SK-N-SH (cell line): ENCODE measurements at regions of chr6 and their contacts with region 1.

Region 1: DNA sequence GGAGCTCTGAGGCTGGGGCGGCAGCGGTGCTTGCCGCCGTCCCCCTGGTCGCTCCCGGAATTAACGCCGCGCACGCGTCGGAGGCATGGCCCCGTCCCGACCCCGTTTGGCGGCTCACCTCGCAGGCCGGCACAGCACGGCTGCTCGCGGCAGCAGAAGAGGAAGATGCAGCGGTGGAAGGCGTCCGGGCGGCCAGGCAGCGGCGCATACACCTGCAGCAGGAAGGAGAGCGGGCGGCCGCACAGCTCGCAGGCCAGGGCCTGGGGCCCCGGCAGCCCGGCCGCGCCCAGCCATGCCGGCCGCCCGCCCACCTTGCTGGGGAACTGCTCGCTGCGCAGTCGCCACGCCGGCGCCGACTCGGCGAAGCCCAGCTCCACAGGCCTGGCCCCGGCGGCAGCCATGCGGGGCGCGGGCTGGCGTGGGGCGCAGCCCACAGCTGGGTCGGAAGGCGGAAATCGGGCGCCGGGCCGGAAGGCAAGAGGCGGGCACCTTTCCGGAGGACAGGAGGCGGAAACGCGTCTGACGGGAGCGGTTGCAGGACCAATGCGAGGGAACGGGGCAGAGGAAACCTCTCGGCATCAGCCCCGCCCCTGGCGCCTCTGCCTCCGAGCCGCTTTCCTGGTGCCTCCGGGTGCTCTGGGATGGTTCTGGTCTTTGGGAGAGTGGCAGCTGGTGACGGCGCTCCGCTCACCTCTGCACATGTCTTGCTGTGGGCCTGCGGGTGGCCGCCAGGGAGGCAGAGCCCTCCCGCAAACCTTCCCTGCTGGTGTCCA is at the start of gene PDCD2:
- DNase-seq: peak; percentile 96
- H3K4me3 ChIP-seq: peak within 1 kb of the TSS; percentile 79 to 97
- H3K27ac ChIP-seq: peak within 1 kb of the TSS; percentile 54 to 89; a peak in 3 of 4 replicates
- H3K4me1 ChIP-seq: peaks cover 0 to 13% of the 10 kb centered on the region in 2 experiments; a peak in 2 of 4 replicates
- H3K27me3 ChIP-seq: no peaks in the 10 kb centered on the region
- CTCF ChIP-seq: no peak
- EP300 ChIP-seq: peak in 1 of 2 experiments; percentile 23; a peak in 1 of 4 replicates
- RAD21 ChIP-seq: no peak
- polyA plus RNA-seq, gene PDCD2: 82.1 and 107 TPM in 2 replicates

Region 2: GRCh38 chr6:170554013-170554795 is 30.2 kb before region 1 on chr6 and contains the start of gene TBP:
- CTCF ChIA-PET with region 1: no interaction called
- POLR2A ChIA-PET with region 1: interaction called, 10 read pairs
- DNase-seq: peak; percentile 91
- H3K4me3 ChIP-seq: peak within 1 kb of the TSS; percentile 89 to 100
- H3K27ac ChIP-seq: peak within 1 kb of the TSS; percentile 77 to 92
- H3K4me1 ChIP-seq: peaks cover 19 to 23% of the 10 kb centered on the region in 2 experiments; a peak in 3 of 4 replicates
- H3K27me3 ChIP-seq: no peaks in the 10 kb centered on the region
- CTCF ChIP-seq: no peak
- EP300 ChIP-seq: no peak
- RAD21 ChIP-seq: no peak
- polyA plus RNA-seq, gene TBP: 45.5 and 54.6 TPM in 2 replicates